ENCODE measurements at regions of chr12 and their contacts with region 1.

Region 1: GRCh38 chr12:63922446-63922845 is 77.9 kb downstream of the SRGAP1 start:
- DNase-seq: no peak
- ATAC-seq: no peak
- H3K4me3 ChIP-seq: no peak overlapping the region
- H3K27ac ChIP-seq: no peak overlapping the region
- H3K4me1 ChIP-seq: no peaks in the 10 kb centered on the region
- H3K27me3 ChIP-seq: no peaks in the 10 kb centered on the region
- CTCF ChIP-seq: no peak
- POLR2A ChIP-seq: no peak

Region 2: GRCh38 chr12:63353559-63353958 is 568.9 kb before region 1 on chr12:
- in situ Hi-C with region 1: no loop called
- intact Hi-C with region 1: no loop called
- DNase-seq: no peak
- ATAC-seq: no peak
- H3K4me3 ChIP-seq: no peak overlapping the region
- H3K27ac ChIP-seq: no peak overlapping the region
- H3K4me1 ChIP-seq: no peaks in the 10 kb centered on the region
- H3K27me3 ChIP-seq: no peaks in the 10 kb centered on the region
- CTCF ChIP-seq: no peak
- POLR2A ChIP-seq: no peak

Region 3: DNA sequence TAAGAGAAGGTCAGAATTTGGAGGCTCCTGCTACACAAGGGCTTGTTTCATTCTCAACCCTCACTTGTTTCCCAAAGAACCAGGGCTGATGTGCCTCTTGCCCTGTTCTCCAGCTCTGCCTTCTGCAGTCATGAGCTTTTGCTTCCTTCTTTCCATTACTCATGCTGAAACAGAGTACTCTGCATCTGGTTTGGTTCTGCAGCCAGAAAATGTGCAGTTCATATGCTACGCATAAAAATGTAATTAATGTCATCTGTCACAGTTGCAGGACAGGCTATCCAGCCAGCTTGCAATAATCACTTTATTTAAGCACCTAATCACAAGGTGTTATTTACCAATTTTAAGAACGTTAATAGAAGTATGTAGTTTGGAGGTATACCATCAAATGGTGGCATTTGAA is 72.3 kb after region 1 on chr12:
- in situ Hi-C with region 1: no loop called
- intact Hi-C with region 1: loop called (anchors 10 kb)
- DNase-seq: no peak
- ATAC-seq: no peak
- H3K4me3 ChIP-seq: no peak overlapping the region
- H3K27ac ChIP-seq: no peak overlapping the region
- H3K4me1 ChIP-seq: no peaks in the 10 kb centered on the region
- H3K27me3 ChIP-seq: no peaks in the 10 kb centered on the region
- CTCF ChIP-seq: no peak
- POLR2A ChIP-seq: no peak

Region 4: GRCh38 chr12:64010069-64010699 is 87.7 kb after region 1 on chr12:
- in situ Hi-C with region 1: no loop called
- intact Hi-C with region 1: no loop called
- DNase-seq: no peak
- ATAC-seq: no peak
- H3K4me3 ChIP-seq: no peak overlapping the region
- H3K27ac ChIP-seq: no peak overlapping the region
- H3K4me1 ChIP-seq: no peaks in the 10 kb centered on the region
- H3K27me3 ChIP-seq: no peaks in the 10 kb centered on the region
- CTCF ChIP-seq: no peak
- POLR2A ChIP-seq: no peak